Posterior cingulate gyrus (tissue), 11 donors: ENCODE measurements at regions of chr13 and their contacts with region 1.

Region 1: GRCh38 chr13:35720690-35721554 is 244.4 kb upstream of the MAB21L1 start:
- DNase-seq: peak; percentile 21 to 94 (median 70)

Region 2: GRCh38 chr13:35210261-35210660 is 510.7 kb before region 1 on chr13:
- intact Hi-C with region 1: loop called (anchors 2 kb)
- DNase-seq: no peak

Region 3: GRCh38 chr13:35630551-35631275 is 90.2 kb before region 1 on chr13:
- intact Hi-C with region 1: loop called (anchors 2 kb)
- DNase-seq: no peak

Region 4: GRCh38 chr13:35909837-35910540 is 189.1 kb after region 1 on chr13:
- intact Hi-C with region 1: no loop called
- DNase-seq: no peak